Activated naive CD4-positive, alpha-beta T cell treated with anti-CD3 and anti-CD28 coated beads for 36 hours (primary cell): ENCODE measurements at regions of chr10 and their contacts with region 1.

Region 1: GRCh38 chr10:74826142-74827044 is at the start of gene KAT6B:
- DNase-seq: peak; percentile 100
- H3K4me3 Mint-ChIP-seq: peak within 1 kb of the TSS; percentile 83
- H3K27ac Mint-ChIP-seq: peak within 1 kb of the TSS; percentile 93
- H3K4me1 Mint-ChIP-seq: peaks cover 55% of the 10 kb centered on the region
- H3K27me3 Mint-ChIP-seq: no peaks in the 10 kb centered on the region
- total RNA-seq, gene KAT6B: 17.3 to 17.9 TPM

Region 2: DNA sequence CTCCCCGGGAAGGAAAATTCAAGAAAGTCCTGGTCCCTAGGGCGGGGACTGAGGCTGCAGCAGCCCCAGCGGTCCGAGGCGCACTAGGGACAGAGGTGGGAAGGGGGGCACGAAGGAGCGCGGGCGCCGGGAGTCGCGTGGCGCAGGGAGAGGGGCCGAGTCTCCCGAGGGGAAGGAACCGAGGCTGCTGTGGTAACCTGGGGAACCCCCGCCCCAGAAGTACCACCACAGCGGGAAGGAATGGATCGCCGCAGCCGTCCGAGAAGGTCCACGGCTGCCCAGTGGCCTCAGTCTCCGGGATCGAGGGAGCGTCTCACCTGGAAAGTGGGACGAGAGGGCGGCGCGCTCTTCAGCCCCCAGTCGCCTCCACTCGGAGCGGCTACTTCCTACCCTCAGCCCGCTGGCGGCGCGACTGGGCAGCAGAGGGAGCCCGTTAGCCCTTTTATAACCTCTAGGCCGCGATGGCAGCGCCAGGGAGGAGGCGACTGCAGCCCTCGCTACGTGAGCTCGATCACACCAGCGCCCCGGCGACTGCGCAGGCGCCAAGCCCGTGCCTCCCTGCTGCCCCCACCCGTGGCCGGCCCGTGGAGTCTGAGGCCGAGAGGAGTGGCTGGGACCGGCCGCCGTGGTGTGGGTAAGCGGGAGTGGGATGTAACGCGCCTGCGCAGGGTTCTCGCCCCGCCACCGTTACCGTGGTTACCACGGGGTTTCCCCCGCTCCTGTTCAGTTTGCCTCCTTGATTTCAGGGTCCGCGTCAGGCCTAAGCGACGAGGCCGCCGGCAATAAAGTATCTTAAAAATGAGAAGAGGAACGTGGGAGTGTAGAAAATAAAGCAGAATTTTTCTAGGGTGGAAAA is 1729.7 kb before region 1 on chr10 and contains the start of gene P4HA1:
- CTCF ChIA-PET with region 1: no interaction called
- intact Hi-C with region 1: loop called (anchors 5 kb)
- DNase-seq: peak; percentile 96
- H3K4me3 Mint-ChIP-seq: peak within 1 kb of the TSS; percentile 83
- H3K27ac Mint-ChIP-seq: peak within 1 kb of the TSS; percentile 93
- H3K4me1 Mint-ChIP-seq: peaks cover 32% of the 10 kb centered on the region
- H3K27me3 Mint-ChIP-seq: no peaks in the 10 kb centered on the region
- total RNA-seq, gene P4HA1: 15.3 to 15.9 TPM

Region 3: GRCh38 chr10:74176380-74177139 is 649.8 kb before region 1 on chr10:
- CTCF ChIA-PET with region 1: no interaction called
- intact Hi-C with region 1: loop called (anchors 2 kb)
- DNase-seq: peak; percentile 96
- H3K4me3 Mint-ChIP-seq: peak overlapping the region; percentile 90
- H3K27ac Mint-ChIP-seq: peak overlapping the region; percentile 93
- H3K4me1 Mint-ChIP-seq: peaks cover 32% of the 10 kb centered on the region
- H3K27me3 Mint-ChIP-seq: no peaks in the 10 kb centered on the region

Region 4: DNA sequence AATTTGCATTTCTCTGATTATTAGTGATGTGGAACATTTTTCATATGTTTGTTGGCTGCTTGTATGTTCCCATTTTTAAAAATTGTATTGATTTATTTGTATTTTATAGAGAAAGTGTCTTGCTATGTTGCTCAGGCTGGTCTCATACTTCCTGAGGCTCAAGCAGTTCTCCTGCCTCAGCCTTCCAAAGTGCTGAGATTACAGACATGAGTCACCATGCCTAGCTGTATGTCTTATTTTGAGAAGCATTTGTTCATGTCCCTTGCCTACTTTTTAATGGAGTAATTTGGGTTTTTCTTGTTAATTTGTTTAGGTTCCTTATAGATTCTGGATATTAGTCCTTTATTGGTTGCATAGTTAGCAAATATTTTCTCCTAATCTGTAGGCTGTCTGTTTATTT is 214.2 kb before region 1 on chr10:
- CTCF ChIA-PET with region 1: no interaction called
- intact Hi-C with region 1: no loop called
- DNase-seq: no peak
- H3K4me3 Mint-ChIP-seq: no peak overlapping the region
- H3K27ac Mint-ChIP-seq: no peak overlapping the region
- H3K4me1 Mint-ChIP-seq: peaks cover 2% of the 10 kb centered on the region
- H3K27me3 Mint-ChIP-seq: no peaks in the 10 kb centered on the region

Region 5: GRCh38 chr10:74738985-74739567 is 87.3 kb before region 1 on chr10:
- CTCF ChIA-PET with region 1: no interaction called
- intact Hi-C with region 1: loop called (anchors 1 kb)
- DNase-seq: peak; percentile 46
- H3K4me3 Mint-ChIP-seq: no peak overlapping the region
- H3K27ac Mint-ChIP-seq: no peak overlapping the region
- H3K4me1 Mint-ChIP-seq: peaks cover 13% of the 10 kb centered on the region
- H3K27me3 Mint-ChIP-seq: no peaks in the 10 kb centered on the region

Region 6: GRCh38 chr10:74813381-74814259 is 12.8 kb before region 1 on chr10:
- CTCF ChIA-PET with region 1: no interaction called
- intact Hi-C with region 1: no loop called
- DNase-seq: no peak
- H3K4me3 Mint-ChIP-seq: no peak overlapping the region
- H3K27ac Mint-ChIP-seq: no peak overlapping the region
- H3K4me1 Mint-ChIP-seq: no peaks in the 10 kb centered on the region
- H3K27me3 Mint-ChIP-seq: no peaks in the 10 kb centered on the region

Region 7: GRCh38 chr10:74841265-74841973 is 15.0 kb after region 1 on chr10:
- CTCF ChIA-PET with region 1: no interaction called
- intact Hi-C with region 1: no loop called
- DNase-seq: no peak
- H3K4me3 Mint-ChIP-seq: no peak overlapping the region
- H3K27ac Mint-ChIP-seq: no peak overlapping the region
- H3K4me1 Mint-ChIP-seq: peaks cover 17% of the 10 kb centered on the region
- H3K27me3 Mint-ChIP-seq: no peaks in the 10 kb centered on the region

Region 8: DNA sequence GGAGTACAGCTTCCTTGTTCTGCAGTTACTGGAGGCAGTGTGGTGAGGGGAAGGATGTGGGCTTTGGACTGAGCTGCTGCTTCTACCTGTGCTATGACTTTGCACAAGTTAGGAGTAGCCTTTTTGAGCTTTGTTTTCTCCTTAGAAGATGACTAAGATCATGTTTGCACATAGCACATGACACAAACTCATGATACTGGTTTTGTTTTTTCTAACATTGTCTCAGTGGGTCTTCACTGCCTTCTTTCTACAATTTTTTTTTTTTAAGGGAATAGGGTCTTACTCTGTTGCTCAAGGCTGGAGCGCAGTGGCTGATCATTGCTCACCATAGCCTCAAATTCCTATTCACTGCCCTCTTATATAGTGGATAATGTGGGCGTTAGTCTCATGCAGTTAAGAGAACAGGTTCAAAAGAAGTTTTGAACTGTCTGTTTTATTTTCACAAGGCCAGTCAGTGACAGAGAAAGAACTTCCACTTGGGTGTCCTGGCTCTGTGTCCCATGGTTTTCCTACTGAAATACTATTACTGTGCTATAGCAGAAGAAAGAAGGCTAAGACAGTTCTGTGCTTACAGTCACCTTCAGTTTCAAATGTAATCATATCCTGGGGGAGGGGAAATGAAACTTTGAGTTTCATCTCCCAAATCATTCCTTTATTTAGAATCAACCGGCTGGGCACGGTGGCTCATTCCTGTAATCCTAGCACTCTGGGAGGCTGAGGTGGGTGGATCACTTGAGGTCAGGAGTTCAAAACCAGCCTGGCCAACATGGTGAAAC is 72.0 kb after region 1 on chr10:
- CTCF ChIA-PET with region 1: no interaction called
- intact Hi-C with region 1: loop called (anchors 1 kb)
- DNase-seq: peak; percentile 70
- H3K4me3 Mint-ChIP-seq: no peak overlapping the region
- H3K27ac Mint-ChIP-seq: peak overlapping the region; percentile 46
- H3K4me1 Mint-ChIP-seq: peaks cover 57% of the 10 kb centered on the region
- H3K27me3 Mint-ChIP-seq: no peaks in the 10 kb centered on the region

Region 9: DNA sequence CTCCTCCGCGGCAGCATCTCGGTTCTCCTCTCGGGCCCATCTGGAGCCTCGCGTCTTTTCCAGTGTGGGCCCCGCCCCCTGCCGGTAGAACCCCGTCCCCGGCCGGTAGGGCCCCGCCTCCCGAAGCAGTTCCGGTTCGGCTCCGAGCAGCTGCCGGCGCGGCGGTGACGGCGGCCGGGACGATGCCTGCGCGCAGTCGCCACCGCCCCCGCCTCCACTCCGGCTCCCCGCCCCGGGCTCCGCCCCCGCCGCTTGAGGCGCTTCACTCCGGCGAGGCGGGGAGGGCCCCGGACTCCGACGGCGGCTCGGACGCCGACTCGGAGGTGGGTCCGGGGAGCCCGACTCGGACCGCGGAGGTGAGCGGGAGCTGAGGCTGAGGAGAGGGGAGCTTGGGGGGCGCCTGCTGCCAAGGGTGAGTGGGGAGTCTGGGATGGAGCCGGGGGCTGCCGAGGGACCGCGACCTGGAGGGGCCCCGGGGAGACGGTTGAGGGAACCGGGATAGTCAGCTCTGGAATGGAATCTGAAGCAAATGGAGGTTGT is 285.0 kb after region 1 on chr10 and contains the start of gene SAMD8:
- CTCF ChIA-PET with region 1: no interaction called
- intact Hi-C with region 1: loop called (anchors 1 kb)
- DNase-seq: peak; percentile 98
- H3K4me3 Mint-ChIP-seq: peak within 1 kb of the TSS; percentile 95
- H3K27ac Mint-ChIP-seq: peak within 1 kb of the TSS; percentile 97
- H3K4me1 Mint-ChIP-seq: peaks cover 44% of the 10 kb centered on the region
- H3K27me3 Mint-ChIP-seq: no peaks in the 10 kb centered on the region
- total RNA-seq, gene SAMD8: 15.3 to 16.9 TPM